CD4-positive, alpha-beta T cell (primary cell): ENCODE measurements at regions of chr19 and their contacts with region 1.

Region 1: GRCh38 chr19:5961969-5962945 is 15.7 kb downstream of the RANBP3 start:
- DNase-seq: peak; percentile 60 to 93 (median 79)
- ATAC-seq: peak; percentile 93
- H3K4me3 ChIP-seq: peak overlapping the region; percentile 41
- H3K4me3 Mint-ChIP-seq: peak overlapping the region; percentile 81
- H3K27ac ChIP-seq: peak overlapping the region; percentile 86 to 91
- H3K27ac Mint-ChIP-seq: peak overlapping the region; percentile 98
- H3K4me1 ChIP-seq: peaks cover 94% of the 10 kb centered on the region
- H3K4me1 Mint-ChIP-seq: peaks cover 97% of the 10 kb centered on the region
- H3K27me3 ChIP-seq: no peaks in the 10 kb centered on the region
- H3K27me3 Mint-ChIP-seq: no peaks in the 10 kb centered on the region
- CTCF ChIP-seq: no peak

Region 2: GRCh38 chr19:5827891-5828660 is 134.2 kb before region 1 on chr19:
- CTCF ChIA-PET with region 1: no interaction called
- POLR2A ChIA-PET with region 1: interaction called, 19 read pairs
- intact Hi-C with region 1: no loop called
- DNase-seq: peak; percentile 85 to 98 (median 92)
- ATAC-seq: peak; percentile 81
- H3K4me3 ChIP-seq: peak overlapping the region; percentile 86
- H3K4me3 Mint-ChIP-seq: peak overlapping the region; percentile 98
- H3K27ac ChIP-seq: peak overlapping the region; percentile 69 to 86
- H3K27ac Mint-ChIP-seq: peak overlapping the region; percentile 95
- H3K4me1 ChIP-seq: peaks cover 31% of the 10 kb centered on the region
- H3K4me1 Mint-ChIP-seq: peaks cover 18% of the 10 kb centered on the region
- H3K27me3 ChIP-seq: peaks cover 0 to 3% of the 10 kb centered on the region in 2 experiments
- H3K27me3 Mint-ChIP-seq: no peaks in the 10 kb centered on the region
- CTCF ChIP-seq: no peak

Region 3: GRCh38 chr19:5926641-5927440 is 35.4 kb before region 1 on chr19:
- CTCF ChIA-PET with region 1: no interaction called
- POLR2A ChIA-PET with region 1: no interaction called
- intact Hi-C with region 1: no loop called
- DNase-seq: no peak
- ATAC-seq: no peak
- H3K4me3 ChIP-seq: no peak overlapping the region
- H3K4me3 Mint-ChIP-seq: no peak overlapping the region
- H3K27ac ChIP-seq: no peak overlapping the region
- H3K27ac Mint-ChIP-seq: no peak overlapping the region
- H3K4me1 ChIP-seq: no peaks in the 10 kb centered on the region
- H3K4me1 Mint-ChIP-seq: no peaks in the 10 kb centered on the region
- H3K27me3 ChIP-seq: no peaks in the 10 kb centered on the region
- H3K27me3 Mint-ChIP-seq: no peaks in the 10 kb centered on the region
- CTCF ChIP-seq: no peak

Region 4: GRCh38 chr19:5947435-5947834 is 14.8 kb before region 1 on chr19:
- CTCF ChIA-PET with region 1: interaction called, 19 read pairs
- POLR2A ChIA-PET with region 1: interaction called, 93 read pairs
- intact Hi-C with region 1: loop called in 1 of 2 experiments (anchors 2 kb)
- DNase-seq: peak in 2 of 14 experiments; percentile 46 to 47
- ATAC-seq: no peak
- H3K4me3 ChIP-seq: no peak overlapping the region
- H3K4me3 Mint-ChIP-seq: no peak overlapping the region
- H3K27ac ChIP-seq: peak overlapping the region; percentile 36 to 76
- H3K27ac Mint-ChIP-seq: peak overlapping the region; percentile 92
- H3K4me1 ChIP-seq: peaks cover 78% of the 10 kb centered on the region
- H3K4me1 Mint-ChIP-seq: peaks cover 73% of the 10 kb centered on the region
- H3K27me3 ChIP-seq: no peaks in the 10 kb centered on the region
- H3K27me3 Mint-ChIP-seq: no peaks in the 10 kb centered on the region
- CTCF ChIP-seq: no peak

Region 5: DNA sequence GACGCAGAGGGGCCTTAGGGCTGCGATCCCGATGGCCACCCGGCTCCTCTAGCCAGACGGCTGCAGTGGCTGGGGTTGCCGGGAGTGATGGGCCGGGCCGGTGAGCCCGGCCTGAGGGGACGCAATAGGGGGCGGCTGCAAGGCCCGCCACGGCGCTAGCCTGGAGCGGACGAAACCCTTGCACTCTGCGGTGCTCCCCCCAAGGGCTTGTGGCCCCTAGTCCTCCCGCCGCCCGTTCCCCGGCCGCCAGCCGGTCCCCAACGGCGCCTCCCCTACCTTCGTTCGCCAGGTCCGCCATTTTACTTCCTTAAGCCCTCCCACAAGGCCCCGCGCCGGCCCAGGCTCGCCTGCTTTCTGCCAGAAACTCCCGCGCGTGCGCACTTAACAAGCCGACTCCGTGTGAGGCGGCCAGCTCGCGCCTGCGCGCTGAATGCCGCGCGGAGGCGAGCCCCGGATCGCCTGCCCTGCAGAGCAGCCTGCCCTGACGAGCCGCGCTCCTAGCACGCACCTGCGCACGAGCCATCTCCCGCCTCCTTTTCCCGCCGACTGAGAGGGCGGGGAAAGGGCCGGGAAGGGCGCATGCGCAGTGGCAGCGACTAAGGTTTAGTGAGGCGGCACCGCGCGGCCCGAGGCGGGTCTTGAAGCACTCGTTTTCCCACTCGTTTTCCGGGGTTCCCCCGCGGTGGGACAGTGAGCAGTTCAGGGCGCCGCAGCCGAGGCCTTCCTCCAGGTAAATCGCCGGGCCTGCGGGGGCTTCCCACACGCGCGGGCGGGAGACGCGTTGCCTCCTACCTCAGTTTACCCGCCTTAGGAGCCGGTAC is 15.7 kb after region 1 on chr19 and contains the start of gene RANBP3:
- CTCF ChIA-PET with region 1: interaction called, 24 read pairs
- POLR2A ChIA-PET with region 1: interaction called, 40 read pairs
- intact Hi-C with region 1: loop called in 1 of 2 experiments (anchors 1 kb)
- DNase-seq: peak; percentile 95 to 100 (median 99)
- ATAC-seq: peak; percentile 92
- H3K4me3 ChIP-seq: peak within 1 kb of the TSS; percentile 95
- H3K4me3 Mint-ChIP-seq: peak within 1 kb of the TSS; percentile 100
- H3K27ac ChIP-seq: peak within 1 kb of the TSS; percentile 78 to 85
- H3K27ac Mint-ChIP-seq: peak within 1 kb of the TSS; percentile 94
- H3K4me1 ChIP-seq: peaks cover 66% of the 10 kb centered on the region
- H3K4me1 Mint-ChIP-seq: peaks cover 52% of the 10 kb centered on the region
- H3K27me3 ChIP-seq: no peaks in the 10 kb centered on the region
- H3K27me3 Mint-ChIP-seq: no peaks in the 10 kb centered on the region
- CTCF ChIP-seq: no peak
- total RNA-seq, gene RANBP3: 82.7 to 88.7 TPM